HepG2 (cell line): ENCODE measurements at regions of chr18 and their contacts with region 1.

Region 1: DNA sequence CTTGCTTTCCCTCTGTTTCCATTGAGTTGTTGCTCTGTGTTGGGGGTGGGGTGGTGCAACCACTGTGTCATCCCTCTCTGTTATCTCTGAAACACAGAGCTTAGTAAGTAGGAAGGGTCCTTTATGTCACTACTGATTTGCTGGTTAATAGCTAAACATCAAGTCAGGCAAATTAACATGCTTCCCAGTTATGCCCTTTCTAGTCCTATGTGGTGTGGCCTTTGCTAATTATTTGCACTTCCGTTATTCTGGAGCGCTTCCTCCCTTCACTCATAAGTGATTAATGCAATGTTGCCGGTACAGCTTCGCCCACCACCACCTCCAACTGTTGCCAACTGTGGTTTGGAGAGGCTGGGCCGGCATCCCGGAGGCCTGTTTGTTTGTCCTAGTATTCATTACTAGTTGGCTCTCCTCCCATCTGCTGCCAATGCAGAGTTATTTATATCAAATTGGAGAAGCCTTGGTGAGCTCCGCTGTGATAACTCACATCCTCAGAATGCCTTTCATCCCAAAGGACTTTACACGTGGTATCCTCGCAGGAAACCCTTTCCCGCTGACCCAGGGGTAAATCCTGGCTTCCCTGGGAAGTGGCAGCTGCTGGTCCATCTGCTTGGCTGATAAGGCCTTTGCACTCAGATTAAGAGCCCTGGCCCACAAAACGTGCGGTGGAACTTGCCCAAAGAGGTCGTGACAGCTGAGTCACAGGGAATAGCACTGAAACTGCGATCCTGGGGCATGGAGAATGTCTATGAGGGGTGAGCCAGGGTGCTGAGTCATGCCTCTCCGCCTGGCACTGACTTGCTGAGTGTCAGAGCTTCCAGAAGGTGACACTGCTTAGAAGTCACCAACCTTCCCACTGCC is 72.0 kb upstream of the ZCCHC2 start:
- DNase-seq: peak; percentile 63
- ATAC-seq: peak; percentile 11; the same call in 2 of the 3 replicates
- H3K4me3 ChIP-seq: no peak overlapping the region; a peak in 1 of 6 replicates
- H3K27ac ChIP-seq: peak overlapping the region; percentile 86
- H3K4me1 ChIP-seq: peaks cover 81% of the 10 kb centered on the region
- H3K27me3 ChIP-seq: no peaks in the 10 kb centered on the region
- CTCF ChIP-seq: no peak
- EP300 ChIP-seq: no peak
- POLR2A ChIP-seq: no peak
- RAD21 ChIP-seq: no peak

Region 2: GRCh38 chr18:62196085-62196484 is 254.7 kb before region 1 on chr18:
- CTCF ChIA-PET with region 1: no interaction called
- POLR2A ChIA-PET with region 1: no interaction called
- in situ Hi-C with region 1: no loop called
- intact Hi-C with region 1: no loop called
- DNase-seq: no peak
- ATAC-seq: no peak
- H3K4me3 ChIP-seq: no peak overlapping the region
- H3K27ac ChIP-seq: no peak overlapping the region
- H3K4me1 ChIP-seq: peaks cover 16% of the 10 kb centered on the region
- H3K27me3 ChIP-seq: no peaks in the 10 kb centered on the region
- CTCF ChIP-seq: peak; percentile 39; the same call in 1 of the 2 replicates
- EP300 ChIP-seq: no peak
- POLR2A ChIP-seq: no peak
- RAD21 ChIP-seq: no peak

Region 3: GRCh38 chr18:62437235-62438017 is 13.3 kb before region 1 on chr18:
- CTCF ChIA-PET with region 1: no interaction called
- POLR2A ChIA-PET with region 1: no interaction called
- in situ Hi-C with region 1: no loop called
- intact Hi-C with region 1: loop called (anchors 2 kb)
- DNase-seq: no peak
- ATAC-seq: no peak
- H3K4me3 ChIP-seq: no peak overlapping the region
- H3K27ac ChIP-seq: no peak overlapping the region
- H3K4me1 ChIP-seq: peaks cover 54% of the 10 kb centered on the region
- H3K27me3 ChIP-seq: no peaks in the 10 kb centered on the region
- CTCF ChIP-seq: no peak
- EP300 ChIP-seq: no peak
- POLR2A ChIP-seq: no peak
- RAD21 ChIP-seq: no peak

Region 4: DNA sequence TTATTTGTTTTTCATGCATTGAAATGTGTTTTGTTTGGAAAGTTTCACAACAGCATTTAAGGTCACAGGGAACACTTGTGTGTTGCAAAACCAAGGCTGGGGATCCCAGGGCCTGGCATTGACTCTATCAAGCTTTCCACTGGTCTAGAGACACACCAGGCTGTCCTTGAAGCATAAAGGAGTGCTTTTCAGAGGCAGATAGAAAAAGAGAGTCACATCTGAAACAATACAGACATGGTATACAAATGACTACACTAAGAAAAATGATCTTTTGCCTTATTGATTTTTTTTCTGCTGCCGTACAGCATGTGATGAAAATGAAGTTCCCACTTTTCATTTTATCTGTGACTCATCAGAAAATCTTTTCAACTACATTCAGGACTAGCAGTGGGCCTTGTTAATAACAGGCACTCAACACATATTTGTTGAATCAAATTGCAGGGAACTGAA is 10.1 kb after region 1 on chr18:
- CTCF ChIA-PET with region 1: interaction called, 8 read pairs
- POLR2A ChIA-PET with region 1: interaction called, 5 read pairs
- in situ Hi-C with region 1: no loop called
- intact Hi-C with region 1: loop called (anchors 1 kb)
- DNase-seq: peak; percentile 99
- ATAC-seq: peak; percentile 96
- H3K4me3 ChIP-seq: peak overlapping the region in 2 of 3 experiments; percentile 44 to 45; a peak in 4 of 6 replicates
- H3K27ac ChIP-seq: peak overlapping the region; percentile 95
- H3K4me1 ChIP-seq: peaks cover 69% of the 10 kb centered on the region
- H3K27me3 ChIP-seq: no peaks in the 10 kb centered on the region
- CTCF ChIP-seq: no peak
- EP300 ChIP-seq: peak; percentile 93 to 96
- POLR2A ChIP-seq: peak in 1 of 2 experiments; percentile 42; a peak in 1 of 4 replicates
- RAD21 ChIP-seq: peak; percentile 56; the same call in 1 of the 2 replicates

Region 5: DNA sequence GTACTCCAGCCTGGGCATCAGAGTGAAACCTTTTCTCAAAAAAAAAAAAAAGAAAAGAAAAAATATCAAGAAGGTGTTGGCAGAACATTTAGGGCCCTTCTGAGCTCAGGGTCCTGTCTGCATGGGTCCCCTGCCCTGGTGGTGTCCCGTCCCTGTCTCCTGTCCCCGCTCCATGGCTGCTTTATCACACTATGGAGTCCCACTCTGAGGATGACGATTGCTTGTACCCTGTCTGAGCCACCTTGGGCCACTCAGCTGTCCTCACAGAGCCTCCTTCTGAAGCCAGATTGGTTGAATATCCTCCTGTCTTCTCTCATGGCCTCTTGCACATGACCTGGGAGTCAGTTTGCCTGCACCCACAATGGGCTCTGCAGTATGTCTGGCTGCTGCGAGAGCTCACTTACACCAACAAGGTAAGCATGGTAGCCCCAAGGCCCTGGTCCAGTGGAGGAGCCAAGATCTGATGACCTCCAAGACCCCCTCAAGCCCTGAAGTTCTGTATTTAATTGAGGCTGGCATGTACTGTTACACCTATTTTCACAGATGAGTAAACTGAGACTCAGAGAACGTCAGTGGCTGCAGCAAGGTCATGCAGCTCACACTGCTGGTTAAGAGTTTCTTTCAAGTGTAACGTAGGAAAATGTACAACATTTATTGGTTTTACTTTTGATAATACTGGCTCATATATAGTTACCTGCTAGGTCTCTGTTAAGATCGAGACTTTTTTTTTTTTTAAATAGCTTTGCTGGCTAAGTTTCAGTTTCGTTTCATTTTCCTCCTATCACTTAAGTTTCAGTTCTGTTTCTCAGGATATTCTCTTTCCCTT is 55.1 kb after region 1 on chr18:
- CTCF ChIA-PET with region 1: no interaction called
- POLR2A ChIA-PET with region 1: no interaction called
- in situ Hi-C with region 1: no loop called
- intact Hi-C with region 1: no loop called
- DNase-seq: no peak
- ATAC-seq: no peak
- H3K4me3 ChIP-seq: peak overlapping the region in 1 of 3 experiments; percentile 10; a peak in 2 of 6 replicates
- H3K27ac ChIP-seq: peak overlapping the region; percentile 49
- H3K4me1 ChIP-seq: peaks cover 68% of the 10 kb centered on the region
- H3K27me3 ChIP-seq: no peaks in the 10 kb centered on the region
- CTCF ChIP-seq: no peak
- EP300 ChIP-seq: no peak
- POLR2A ChIP-seq: no peak
- RAD21 ChIP-seq: no peak

Region 6: DNA sequence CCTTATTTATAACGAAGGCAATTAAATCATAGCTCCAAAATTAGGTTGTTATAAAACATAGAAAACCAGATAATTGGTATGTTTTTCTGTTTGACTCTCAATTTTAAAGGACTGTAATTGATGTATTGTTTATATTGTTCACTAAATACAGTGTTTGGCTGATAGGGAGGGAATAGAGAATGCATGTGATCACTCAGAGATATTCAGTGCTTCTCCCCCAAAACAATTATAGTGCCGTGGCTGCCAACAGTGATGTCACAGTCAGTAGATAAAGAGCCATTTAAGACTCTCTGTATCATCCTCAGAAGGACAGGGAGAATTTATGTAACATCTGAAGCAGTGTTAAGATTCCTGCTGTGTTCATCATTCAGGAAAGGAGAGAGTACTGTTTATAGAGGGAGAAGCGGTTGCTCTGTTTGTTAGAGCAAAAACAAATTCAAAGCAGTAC is 334.2 kb after region 1 on chr18:
- CTCF ChIA-PET with region 1: no interaction called
- POLR2A ChIA-PET with region 1: no interaction called
- in situ Hi-C with region 1: no loop called
- intact Hi-C with region 1: no loop called
- DNase-seq: no peak
- ATAC-seq: no peak
- H3K4me3 ChIP-seq: no peak overlapping the region
- H3K27ac ChIP-seq: no peak overlapping the region
- H3K4me1 ChIP-seq: peaks cover 81% of the 10 kb centered on the region
- H3K27me3 ChIP-seq: no peaks in the 10 kb centered on the region
- CTCF ChIP-seq: no peak
- EP300 ChIP-seq: no peak
- POLR2A ChIP-seq: no peak
- RAD21 ChIP-seq: no peak